ENCODE measurements at regions of chr12 and their contacts with region 1.

Region 1: GRCh38 chr12:32659908-32660440 is 19.1 kb upstream of the DNM1L start:
- DNase-seq: no peak
- H3K4me3 ChIP-seq: no peak overlapping the region
- H3K27ac ChIP-seq: peak overlapping the region in 3 of 5 donors; percentile 1 to 79 (median 52)
- H3K4me1 ChIP-seq: peaks cover 0 to 20% (median 8%) of the 10 kb centered on the region in 4 donors
- H3K27me3 ChIP-seq: no peaks in the 10 kb centered on the region
- CTCF ChIP-seq: no peak
- EP300 ChIP-seq: no peak
- POLR2A ChIP-seq: no peak

Region 2: GRCh38 chr12:32360956-32361355 is 299.0 kb before region 1 on chr12:
- intact Hi-C with region 1: loop called (anchors 5 kb)
- DNase-seq: no peak
- H3K4me3 ChIP-seq: no peak overlapping the region
- H3K27ac ChIP-seq: no peak overlapping the region
- H3K4me1 ChIP-seq: peaks cover 0 to 8% (median 2%) of the 10 kb centered on the region in 4 donors
- H3K27me3 ChIP-seq: no peaks in the 10 kb centered on the region
- CTCF ChIP-seq: no peak
- EP300 ChIP-seq: no peak
- POLR2A ChIP-seq: no peak

Region 3: DNA sequence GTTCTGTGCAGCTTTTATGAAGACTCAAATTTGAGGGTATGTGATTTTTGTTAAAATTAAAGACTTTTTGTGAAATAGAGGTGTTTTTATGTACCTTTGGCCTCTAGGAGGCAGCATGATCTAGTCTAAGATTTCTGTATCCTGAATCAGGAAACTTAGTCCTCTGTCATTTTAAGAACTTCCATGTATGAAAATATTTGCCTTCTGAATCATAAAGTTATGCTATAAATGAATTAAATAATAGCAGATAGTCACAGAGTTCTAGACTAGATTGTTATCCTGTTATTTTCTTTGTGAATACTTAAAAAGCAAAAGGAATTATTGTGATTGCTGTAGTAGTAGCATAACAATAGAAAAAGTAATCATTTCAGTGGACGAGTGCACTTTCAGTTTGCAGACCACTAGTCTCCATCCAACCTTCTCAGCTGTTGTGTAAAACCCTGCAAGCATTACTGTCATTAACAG is 204.3 kb before region 1 on chr12:
- intact Hi-C with region 1: loop called (anchors 5 kb)
- DNase-seq: peak in 1 of 2 donors; percentile 86
- H3K4me3 ChIP-seq: peak overlapping the region; percentile 11 to 29 (median 16)
- H3K27ac ChIP-seq: peak overlapping the region in 4 of 5 donors; percentile 31 to 80 (median 70)
- H3K4me1 ChIP-seq: peaks cover 23 to 74% (median 47%) of the 10 kb centered on the region in 4 donors
- H3K27me3 ChIP-seq: no peaks in the 10 kb centered on the region
- CTCF ChIP-seq: peak in 4 of 7 experiments; percentile 32 to 57 (median 54)
- EP300 ChIP-seq: no peak
- POLR2A ChIP-seq: no peak

Region 4: DNA sequence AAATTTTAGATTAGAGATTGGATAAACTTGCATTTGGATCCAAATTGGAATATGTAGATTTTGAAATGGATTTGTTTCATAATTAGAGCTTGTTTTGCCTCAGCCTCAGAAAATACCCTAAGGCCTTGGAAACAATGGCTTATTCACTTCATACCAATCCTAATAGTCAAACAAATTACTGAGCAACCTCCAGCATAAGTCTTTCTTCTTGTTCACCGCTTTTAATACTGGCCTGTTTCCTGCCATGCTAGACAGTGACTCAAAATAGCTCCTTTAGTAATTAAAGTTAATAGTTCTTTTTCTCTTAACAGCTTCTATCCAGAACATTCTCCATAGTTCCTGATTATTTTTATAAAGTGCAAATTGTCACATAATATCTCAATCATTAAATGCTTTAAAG is 91.7 kb before region 1 on chr12:
- intact Hi-C with region 1: no loop called
- DNase-seq: peak in 1 of 2 donors; percentile 28
- H3K4me3 ChIP-seq: no peak overlapping the region
- H3K27ac ChIP-seq: peak overlapping the region in 4 of 5 donors; percentile 38 to 73 (median 67)
- H3K4me1 ChIP-seq: peaks cover 45 to 92% (median 59%) of the 10 kb centered on the region in 4 donors
- H3K27me3 ChIP-seq: no peaks in the 10 kb centered on the region
- CTCF ChIP-seq: no peak
- EP300 ChIP-seq: no peak
- POLR2A ChIP-seq: no peak

Region 5: DNA sequence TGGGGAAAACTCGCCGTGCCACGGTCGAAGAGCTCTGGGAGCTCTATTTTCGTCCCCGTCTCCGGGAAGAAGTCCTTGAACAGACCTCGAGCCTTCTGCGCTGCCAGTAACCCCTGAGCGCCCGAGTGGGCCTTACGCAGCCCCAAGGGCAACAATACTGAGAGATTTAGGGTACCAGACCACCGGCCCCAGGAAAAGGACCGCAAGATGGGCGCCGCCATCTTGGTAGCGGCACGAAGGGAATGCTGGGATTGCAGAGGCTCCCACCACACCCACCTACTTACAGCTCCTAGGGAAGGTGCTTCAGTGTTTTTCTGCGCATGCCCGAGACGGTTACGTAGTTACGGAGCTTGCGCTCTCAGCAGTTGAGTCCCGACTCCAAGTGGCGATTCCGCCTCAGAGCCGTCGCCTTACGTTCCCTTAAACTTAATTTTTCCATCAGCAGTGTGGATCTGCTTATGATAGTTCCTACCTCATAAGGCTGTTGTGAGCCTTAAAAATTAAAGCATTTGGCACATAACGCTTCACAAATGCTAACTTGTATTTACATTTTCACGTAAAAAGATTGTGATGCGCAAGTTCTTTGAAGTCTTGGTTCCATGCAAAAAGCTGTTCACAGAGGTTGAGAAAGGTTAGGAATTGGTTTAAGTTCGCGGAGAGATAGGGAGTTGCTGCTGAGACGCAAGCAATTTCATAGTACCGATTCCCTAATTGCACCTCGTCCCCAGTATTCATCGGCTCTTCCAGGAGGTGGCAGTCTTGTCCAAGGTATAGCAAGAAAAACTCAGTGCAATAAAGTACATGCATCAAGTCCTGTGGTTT is 95.9 kb after region 1 on chr12 and contains the start of gene YARS2:
- intact Hi-C with region 1: no loop called
- DNase-seq: peak; percentile 97 to 99
- H3K4me3 ChIP-seq: peak within 1 kb of the TSS; percentile 79 to 98 (median 90)
- H3K27ac ChIP-seq: peak within 1 kb of the TSS; percentile 71 to 94 (median 87)
- H3K4me1 ChIP-seq: peaks cover 11 to 28% (median 20%) of the 10 kb centered on the region in 4 donors
- H3K27me3 ChIP-seq: no peaks in the 10 kb centered on the region
- CTCF ChIP-seq: peak in 5 of 7 experiments; percentile 59 to 90 (median 82)
- EP300 ChIP-seq: no peak
- POLR2A ChIP-seq: peak in 1 of 4 donors; percentile 12
- total RNA-seq, gene YARS2: 0.58 to 22.6 (median 10.7) TPM

Region 6: GRCh38 chr12:33734871-33735270 is 1074.9 kb after region 1 on chr12:
- intact Hi-C with region 1: no loop called
- DNase-seq: no peak
- H3K4me3 ChIP-seq: no peak overlapping the region
- H3K27ac ChIP-seq: no peak overlapping the region
- H3K4me1 ChIP-seq: no peaks in the 10 kb centered on the region
- H3K27me3 ChIP-seq: no peaks in the 10 kb centered on the region
- CTCF ChIP-seq: no peak
- EP300 ChIP-seq: no peak
- POLR2A ChIP-seq: no peak

Measured in stomach (tissue), 19 donors.